B cell (primary cell): ENCODE measurements at regions of chr14 and their contacts with region 1.

Region 1: GRCh38 chr14:89365061-89365801 is 51.8 kb downstream of the FOXN3 start:
- DNase-seq: peak; percentile 87
- ATAC-seq: peak; percentile 93
- H3K4me3 ChIP-seq: peak overlapping the region; percentile 29 to 60 (median 51)
- H3K4me3 Mint-ChIP-seq: peak overlapping the region; percentile 84
- H3K27ac ChIP-seq: peak overlapping the region; percentile 86 to 92
- H3K27ac Mint-ChIP-seq: peak overlapping the region; percentile 90
- H3K4me1 ChIP-seq: peaks cover 43 to 52% of the 10 kb centered on the region in 2 donors
- H3K4me1 Mint-ChIP-seq: peaks cover 57% of the 10 kb centered on the region
- H3K27me3 ChIP-seq: no peaks in the 10 kb centered on the region
- H3K27me3 Mint-ChIP-seq: no peaks in the 10 kb centered on the region
- CTCF ChIP-seq: no peak

Region 2: GRCh38 chr14:89040460-89041259 is 324.6 kb before region 1 on chr14:
- CTCF ChIA-PET with region 1: no interaction called
- POLR2A ChIA-PET with region 1: no interaction called
- intact Hi-C with region 1: no loop called
- DNase-seq: peak; percentile 79
- ATAC-seq: peak; percentile 68
- H3K4me3 ChIP-seq: peak overlapping the region in 4 of 5 experiments; percentile 35 to 63 (median 42)
- H3K4me3 Mint-ChIP-seq: peak overlapping the region; percentile 85
- H3K27ac ChIP-seq: no peak overlapping the region
- H3K27ac Mint-ChIP-seq: no peak overlapping the region
- H3K4me1 ChIP-seq: peaks cover 15% of the 10 kb centered on the region in 2 donors
- H3K4me1 Mint-ChIP-seq: peaks cover 15% of the 10 kb centered on the region
- H3K27me3 ChIP-seq: peaks cover 0 to 12% (median 7%) of the 10 kb centered on the region in 4 experiments
- H3K27me3 Mint-ChIP-seq: peaks cover 47% of the 10 kb centered on the region
- CTCF ChIP-seq: peak; percentile 85

Region 3: GRCh38 chr14:89276424-89276975 is 88.7 kb before region 1 on chr14:
- CTCF ChIA-PET with region 1: no interaction called
- POLR2A ChIA-PET with region 1: no interaction called
- intact Hi-C with region 1: no loop called
- DNase-seq: peak; percentile 62
- ATAC-seq: peak; percentile 75
- H3K4me3 ChIP-seq: no peak overlapping the region
- H3K4me3 Mint-ChIP-seq: no peak overlapping the region
- H3K27ac ChIP-seq: peak overlapping the region in 1 of 2 donors; percentile 54
- H3K27ac Mint-ChIP-seq: peak overlapping the region; percentile 51
- H3K4me1 ChIP-seq: peaks cover 27 to 29% of the 10 kb centered on the region in 2 donors
- H3K4me1 Mint-ChIP-seq: peaks cover 46% of the 10 kb centered on the region
- H3K27me3 ChIP-seq: no peaks in the 10 kb centered on the region
- H3K27me3 Mint-ChIP-seq: no peaks in the 10 kb centered on the region
- CTCF ChIP-seq: no peak

Region 4: GRCh38 chr14:89336338-89336737 is 28.9 kb before region 1 on chr14:
- CTCF ChIA-PET with region 1: interaction called, 16 read pairs
- POLR2A ChIA-PET with region 1: no interaction called
- intact Hi-C with region 1: no loop called
- DNase-seq: peak; percentile 69
- ATAC-seq: peak; percentile 69
- H3K4me3 ChIP-seq: no peak overlapping the region
- H3K4me3 Mint-ChIP-seq: no peak overlapping the region
- H3K27ac ChIP-seq: peak overlapping the region in 1 of 2 donors; percentile 31
- H3K27ac Mint-ChIP-seq: peak overlapping the region; percentile 62
- H3K4me1 ChIP-seq: peaks cover 39 to 42% of the 10 kb centered on the region in 2 donors
- H3K4me1 Mint-ChIP-seq: peaks cover 67% of the 10 kb centered on the region
- H3K27me3 ChIP-seq: no peaks in the 10 kb centered on the region
- H3K27me3 Mint-ChIP-seq: no peaks in the 10 kb centered on the region
- CTCF ChIP-seq: peak; percentile 52

Region 5: GRCh38 chr14:89422181-89422951 is 57.1 kb after region 1 on chr14:
- CTCF ChIA-PET with region 1: no interaction called
- POLR2A ChIA-PET with region 1: no interaction called
- intact Hi-C with region 1: no loop called
- DNase-seq: no peak
- ATAC-seq: no peak
- H3K4me3 ChIP-seq: no peak overlapping the region
- H3K4me3 Mint-ChIP-seq: no peak overlapping the region
- H3K27ac ChIP-seq: no peak overlapping the region
- H3K27ac Mint-ChIP-seq: no peak overlapping the region
- H3K4me1 ChIP-seq: peaks cover 24 to 34% of the 10 kb centered on the region in 2 donors
- H3K4me1 Mint-ChIP-seq: peaks cover 29% of the 10 kb centered on the region
- H3K27me3 ChIP-seq: no peaks in the 10 kb centered on the region
- H3K27me3 Mint-ChIP-seq: no peaks in the 10 kb centered on the region
- CTCF ChIP-seq: no peak

Region 6: DNA sequence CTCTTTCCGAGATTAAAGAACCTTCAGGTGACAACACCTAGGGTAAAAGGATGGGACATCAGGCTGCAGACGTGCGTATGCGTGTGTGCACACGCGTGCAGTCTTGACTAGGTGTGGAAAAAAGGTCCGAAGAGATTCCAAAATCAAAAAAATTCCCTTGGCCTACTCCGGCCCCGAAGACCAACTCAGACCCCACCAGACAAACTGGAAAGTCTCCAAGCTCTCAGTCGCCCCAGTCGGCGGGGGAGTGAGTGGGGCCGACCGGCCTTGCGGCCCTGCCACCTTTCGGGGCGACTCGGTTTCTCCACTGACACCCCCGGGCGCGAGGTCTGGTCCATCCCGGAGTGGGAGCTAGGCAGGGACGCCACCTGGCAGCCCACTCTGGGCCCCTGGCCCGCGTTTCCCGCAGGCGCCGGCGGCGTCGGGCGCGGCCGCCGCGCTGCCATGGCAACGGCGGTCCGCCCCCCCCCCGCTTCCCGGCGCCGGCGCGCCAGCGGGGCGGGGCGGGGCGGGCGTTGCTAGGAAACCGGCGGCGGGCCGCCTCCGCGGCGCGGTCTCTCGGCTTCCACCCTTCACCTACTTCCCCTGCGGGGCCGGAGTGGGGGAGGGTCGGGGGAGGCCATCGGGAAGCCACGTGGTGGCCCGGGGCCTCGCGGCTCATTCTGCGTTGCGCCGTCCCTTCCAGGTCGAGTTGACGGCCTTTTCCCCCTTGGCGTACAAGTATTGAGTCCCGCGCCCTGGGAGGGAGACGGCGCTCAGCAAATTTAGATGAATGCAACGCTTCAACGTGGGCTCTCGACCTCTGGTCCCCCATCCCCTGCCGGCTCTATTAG is 336.2 kb after region 1 on chr14:
- CTCF ChIA-PET with region 1: no interaction called
- POLR2A ChIA-PET with region 1: no interaction called
- intact Hi-C with region 1: loop called (anchors 1 kb)
- DNase-seq: peak; percentile 90
- ATAC-seq: peak; percentile 96
- H3K4me3 ChIP-seq: peak overlapping the region; percentile 4 to 80 (median 62)
- H3K4me3 Mint-ChIP-seq: peak overlapping the region; percentile 88
- H3K27ac ChIP-seq: peak overlapping the region; percentile 28 to 71
- H3K27ac Mint-ChIP-seq: peak overlapping the region; percentile 85
- H3K4me1 ChIP-seq: peaks cover 25% of the 10 kb centered on the region in 2 donors
- H3K4me1 Mint-ChIP-seq: peaks cover 25% of the 10 kb centered on the region
- H3K27me3 ChIP-seq: no peaks in the 10 kb centered on the region
- H3K27me3 Mint-ChIP-seq: no peaks in the 10 kb centered on the region
- CTCF ChIP-seq: no peak